ENCODE measurements at regions of chr15 and their contacts with region 1.

Region 1: GRCh38 chr15:89781891-89782618 is 5.9 kb downstream of the MESP2 start:
- DNase-seq: no peak
- ATAC-seq: peak in 1 of 4 donors; percentile 42
- H3K4me3 ChIP-seq: no peak overlapping the region
- H3K27ac ChIP-seq: peak overlapping the region in 1 of 12 donors; percentile 24
- H3K4me1 ChIP-seq: peaks cover 0 to 31% (median 0%) of the 10 kb centered on the region in 12 donors
- H3K27me3 ChIP-seq: no peaks in the 10 kb centered on the region
- CTCF ChIP-seq: no peak
- POLR2A ChIP-seq: no peak

Region 2: DNA sequence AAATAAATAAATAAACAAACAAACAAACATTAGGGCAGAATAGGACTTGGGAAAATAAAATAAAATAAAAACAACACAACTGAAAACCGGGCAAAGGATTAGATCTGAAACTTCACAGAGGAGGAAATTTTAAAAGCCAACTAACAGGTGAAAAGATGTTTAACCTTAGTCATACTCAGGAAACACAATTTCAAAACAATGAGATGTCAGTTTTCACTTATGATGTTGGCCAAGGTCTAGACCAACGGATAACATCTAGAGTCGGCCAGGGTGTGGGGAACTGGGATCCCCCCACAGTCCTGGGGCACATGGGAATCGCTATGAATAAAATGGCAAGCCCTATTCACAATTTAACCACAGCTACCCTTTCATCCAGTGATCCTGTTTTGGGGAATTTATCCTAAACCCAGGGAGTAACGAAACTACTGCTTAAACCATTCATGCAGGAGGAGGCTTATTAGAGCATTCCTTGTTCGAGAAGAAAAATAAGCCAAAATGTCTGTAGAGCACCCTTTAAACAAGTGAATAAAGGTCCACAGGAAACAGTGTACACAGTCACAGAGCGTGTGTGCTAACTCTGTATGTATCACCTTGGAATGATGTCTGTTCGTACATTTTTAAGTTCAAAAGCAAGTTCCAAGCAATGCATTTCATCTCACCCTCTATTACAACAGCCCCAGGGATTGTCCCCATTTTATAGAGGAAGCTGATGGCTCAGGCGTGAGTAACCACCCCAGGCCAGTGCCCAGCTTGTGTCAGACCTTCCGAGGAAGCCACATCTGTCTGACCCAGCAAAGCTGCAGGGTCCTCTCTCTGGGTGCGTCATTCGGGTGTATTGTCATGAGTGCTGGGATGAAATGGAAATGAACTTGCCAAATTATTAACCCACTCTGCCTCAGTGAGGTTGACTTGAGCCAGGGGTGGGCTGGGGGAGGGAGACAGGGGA is 38.9 kb after region 1 on chr15:
- intact Hi-C with region 1: loop called in 3 of 10 experiments (anchors 5 to 10 kb)
- DNase-seq: no peak
- ATAC-seq: peak; percentile 18 to 76 (median 48)
- H3K4me3 ChIP-seq: no peak overlapping the region
- H3K27ac ChIP-seq: peak overlapping the region in 1 of 12 donors; percentile 64
- H3K4me1 ChIP-seq: peaks cover 0 to 41% (median 0%) of the 10 kb centered on the region in 12 donors
- H3K27me3 ChIP-seq: peaks cover 0 to 11% (median under 1%) of the 10 kb centered on the region in 9 donors
- CTCF ChIP-seq: no peak
- POLR2A ChIP-seq: no peak